Gastrocnemius medialis (tissue), 4 donors: ENCODE measurements at regions of chr7 and their contacts with region 1.

Region 1: GRCh38 chr7:1086588-1087464 is 1.1 kb upstream of the GPER1 start:
- DNase-seq: peak; percentile 32 to 51
- ATAC-seq: peak; percentile 65 to 81
- H3K4me3 ChIP-seq: peak overlapping the region; percentile 36 to 53 (median 48)
- H3K27ac ChIP-seq: peak overlapping the region in 2 of 4 donors; percentile 24 to 57
- H3K4me1 ChIP-seq: peaks cover 7 to 17% of the 10 kb centered on the region in 2 donors
- H3K27me3 ChIP-seq: no peaks in the 10 kb centered on the region
- CTCF ChIP-seq: peak; percentile 67 to 92 (median 90)
- POLR2A ChIP-seq: no peak

Region 2: GRCh38 chr7:1004018-1004852 is 82.6 kb before region 1 on chr7:
- in situ Hi-C with region 1: no loop called
- intact Hi-C with region 1: no loop called
- DNase-seq: no peak
- ATAC-seq: no peak
- H3K4me3 ChIP-seq: no peak overlapping the region
- H3K27ac ChIP-seq: no peak overlapping the region
- H3K4me1 ChIP-seq: no peaks in the 10 kb centered on the region
- H3K27me3 ChIP-seq: no peaks in the 10 kb centered on the region
- CTCF ChIP-seq: no peak
- POLR2A ChIP-seq: no peak

Region 3: DNA sequence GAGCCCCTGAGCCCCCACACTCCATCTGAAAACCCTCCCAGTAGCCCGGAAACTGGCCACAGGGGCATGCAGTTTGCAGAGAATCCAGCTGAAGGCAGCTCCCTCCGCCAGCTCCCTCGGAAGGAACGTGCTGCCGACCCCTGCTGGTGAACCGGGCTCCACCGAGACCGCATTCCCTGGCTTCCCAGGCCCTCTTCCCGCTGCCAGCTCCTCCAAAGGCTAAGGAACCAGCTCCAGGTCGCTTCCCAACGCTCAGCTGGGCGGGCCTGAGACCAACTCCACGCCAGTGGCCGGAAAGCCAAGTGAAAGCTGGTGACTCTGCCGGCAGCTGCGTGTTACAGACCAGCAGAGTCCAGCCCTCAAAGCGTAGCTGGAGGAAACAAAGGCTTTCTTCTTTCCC is 36.9 kb after region 1 on chr7:
- in situ Hi-C with region 1: no loop called
- intact Hi-C with region 1: loop called (anchors 1 kb)
- DNase-seq: peak; percentile 59 to 85
- ATAC-seq: peak; percentile 71 to 91
- H3K4me3 ChIP-seq: peak overlapping the region; percentile 41 to 61 (median 44)
- H3K27ac ChIP-seq: peak overlapping the region; percentile 77 to 86 (median 80)
- H3K4me1 ChIP-seq: peaks cover 12% of the 10 kb centered on the region in 2 donors
- H3K27me3 ChIP-seq: no peaks in the 10 kb centered on the region
- CTCF ChIP-seq: peak; percentile 46 to 66 (median 57)
- POLR2A ChIP-seq: no peak

Region 4: DNA sequence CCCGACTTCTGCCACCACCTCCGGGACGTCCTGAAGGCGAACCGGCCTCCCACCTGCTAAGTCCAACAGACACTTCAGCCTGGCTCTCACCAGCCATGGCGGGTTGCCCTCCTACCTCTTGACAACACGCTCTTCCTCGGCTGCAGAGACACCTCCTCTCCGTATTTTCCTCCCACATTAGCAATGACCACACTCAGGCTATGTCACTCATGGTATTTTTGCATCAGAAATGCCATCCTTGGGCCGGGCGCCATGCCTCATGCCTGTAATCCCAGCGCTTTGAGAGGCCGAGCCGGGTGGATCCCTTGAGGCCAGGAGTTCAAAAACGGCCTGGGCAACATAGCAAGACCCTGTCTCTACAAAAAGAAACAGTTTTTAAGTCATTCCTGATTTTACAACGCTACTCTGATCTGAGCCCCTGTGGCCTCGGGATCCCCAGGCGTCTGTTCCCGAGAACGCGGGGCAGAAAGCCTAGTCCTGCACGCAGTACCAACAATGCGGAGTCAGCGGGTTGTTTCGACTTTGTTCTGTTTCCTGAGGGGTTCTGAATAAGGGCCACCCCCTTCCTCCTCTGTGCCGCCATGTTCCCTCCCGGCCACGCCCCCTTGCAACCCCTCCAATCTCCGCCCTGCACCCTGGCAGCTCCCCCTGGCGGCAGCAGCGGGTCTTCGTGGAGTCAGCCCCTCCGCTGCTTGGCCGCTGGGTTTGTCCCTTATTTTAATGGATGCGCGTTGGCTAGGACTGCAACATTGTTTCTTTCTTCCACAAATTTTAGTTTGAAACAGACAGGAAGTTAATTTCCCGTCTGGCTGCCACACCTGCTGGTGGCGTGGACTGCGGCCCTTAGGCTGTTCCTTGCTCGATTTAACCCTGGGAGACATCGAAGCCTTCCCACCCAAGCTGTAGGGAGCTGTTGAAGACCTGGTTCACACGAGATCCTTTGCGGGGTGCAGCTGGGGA is 82.9 kb after region 1 on chr7:
- in situ Hi-C with region 1: loop called in 1 of 4 experiments (anchors 5 kb)
- intact Hi-C with region 1: no loop called
- DNase-seq: peak; percentile 63 to 74
- ATAC-seq: peak; percentile 75 to 86
- H3K4me3 ChIP-seq: peak overlapping the region; percentile 55 to 72 (median 60)
- H3K27ac ChIP-seq: peak overlapping the region in 3 of 4 donors; percentile 56 to 65 (median 64)
- H3K4me1 ChIP-seq: peaks cover 11 to 14% of the 10 kb centered on the region in 2 donors
- H3K27me3 ChIP-seq: no peaks in the 10 kb centered on the region
- CTCF ChIP-seq: peak; percentile 43 to 89 (median 80)
- POLR2A ChIP-seq: no peak

Region 5: DNA sequence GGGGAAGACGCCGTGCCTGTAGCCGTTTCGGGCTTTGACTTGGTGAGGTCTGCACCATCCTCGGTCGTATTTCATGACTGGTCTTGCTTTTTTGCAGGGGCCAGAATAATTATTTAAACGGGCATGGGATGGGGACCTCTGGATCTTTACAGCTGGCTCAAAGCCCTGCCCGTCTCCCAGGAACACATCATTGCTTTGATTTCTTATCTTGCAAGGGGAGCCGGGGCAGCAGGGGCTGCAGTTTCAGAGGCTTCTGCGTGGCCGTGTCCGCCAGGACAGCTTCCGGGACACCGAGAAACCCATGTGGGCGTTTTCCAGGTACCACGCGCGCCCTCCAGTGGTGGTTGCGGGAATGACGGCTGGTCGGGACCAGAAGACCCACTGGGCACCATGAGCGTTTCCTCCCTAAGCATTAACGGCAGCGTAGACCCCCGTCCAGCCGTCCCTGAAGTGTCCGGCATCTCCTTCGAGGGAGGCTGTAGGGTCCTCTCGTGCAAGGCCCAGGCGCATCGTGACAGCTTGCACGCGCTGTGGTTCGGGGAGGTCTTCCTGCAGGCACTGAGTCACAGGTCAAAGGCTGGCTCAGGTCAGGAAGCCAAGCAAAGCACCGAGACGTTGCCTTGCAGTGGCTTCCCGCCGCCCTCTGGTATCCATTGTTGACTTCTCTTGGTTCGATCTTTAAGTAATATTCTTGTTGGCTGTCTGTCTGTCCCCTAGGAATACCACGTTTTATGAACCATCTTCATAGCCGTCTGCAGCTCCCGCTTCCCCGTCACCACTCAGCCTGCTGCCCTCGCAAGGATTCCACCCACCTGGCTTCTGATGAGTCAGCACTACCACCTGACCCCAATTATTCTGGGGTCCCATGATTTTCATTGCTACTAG is 89.4 kb after region 1 on chr7:
- in situ Hi-C with region 1: loop called in 3 of 4 experiments (anchors 5 to 10 kb)
- intact Hi-C with region 1: loop called (anchors 1 kb)
- DNase-seq: peak; percentile 41 to 65
- ATAC-seq: peak; percentile 83 to 92
- H3K4me3 ChIP-seq: peak overlapping the region; percentile 8 to 45 (median 37)
- H3K27ac ChIP-seq: peak overlapping the region in 1 of 4 donors; percentile 37
- H3K4me1 ChIP-seq: peaks cover 4 to 8% of the 10 kb centered on the region in 2 donors
- H3K27me3 ChIP-seq: peaks cover 0 to 5% (median 5%) of the 10 kb centered on the region in 3 donors
- CTCF ChIP-seq: peak; percentile 67 to 91 (median 84)
- POLR2A ChIP-seq: no peak

Region 6: GRCh38 chr7:1181640-1182039 is 94.8 kb after region 1 on chr7:
- in situ Hi-C with region 1: loop called in 2 of 4 experiments (anchors 5 to 10 kb)
- intact Hi-C with region 1: loop called (anchors 1 kb)
- DNase-seq: no peak
- ATAC-seq: no peak
- H3K4me3 ChIP-seq: no peak overlapping the region
- H3K27ac ChIP-seq: no peak overlapping the region
- H3K4me1 ChIP-seq: no peaks in the 10 kb centered on the region
- H3K27me3 ChIP-seq: peaks cover 19 to 34% (median 27%) of the 10 kb centered on the region in 3 donors
- CTCF ChIP-seq: no peak
- POLR2A ChIP-seq: no peak